Posterior vena cava (tissue), 2 donors: ENCODE measurements at regions of chr10 and their contacts with region 1.

Region 1: GRCh38 chr10:91251430-91252056 is 31.1 kb downstream of the PCGF5 start:
- DNase-seq: no peak

Region 2: DNA sequence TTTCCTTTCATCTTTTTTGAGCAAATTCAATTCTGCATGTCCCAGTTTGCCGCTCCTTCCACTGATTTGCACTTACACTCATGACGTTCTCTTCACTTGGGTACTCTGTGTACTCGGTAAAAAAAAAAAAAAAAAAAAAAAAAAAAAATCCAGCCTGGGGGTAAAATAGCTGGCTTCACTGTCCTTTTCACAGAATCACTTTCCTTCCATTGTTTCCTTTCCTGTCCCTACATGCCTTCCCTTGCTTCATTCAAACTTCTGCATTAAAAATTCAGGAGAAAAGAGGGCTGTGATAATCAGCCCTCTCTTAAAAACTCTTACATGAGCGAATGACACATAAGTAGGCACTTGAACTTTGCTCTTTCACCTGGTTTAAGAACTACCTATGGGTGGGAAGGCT is 339.4 kb before region 1 on chr10:
- intact Hi-C with region 1: loop called (anchors 5 to 10 kb)
- DNase-seq: no peak

Region 3: DNA sequence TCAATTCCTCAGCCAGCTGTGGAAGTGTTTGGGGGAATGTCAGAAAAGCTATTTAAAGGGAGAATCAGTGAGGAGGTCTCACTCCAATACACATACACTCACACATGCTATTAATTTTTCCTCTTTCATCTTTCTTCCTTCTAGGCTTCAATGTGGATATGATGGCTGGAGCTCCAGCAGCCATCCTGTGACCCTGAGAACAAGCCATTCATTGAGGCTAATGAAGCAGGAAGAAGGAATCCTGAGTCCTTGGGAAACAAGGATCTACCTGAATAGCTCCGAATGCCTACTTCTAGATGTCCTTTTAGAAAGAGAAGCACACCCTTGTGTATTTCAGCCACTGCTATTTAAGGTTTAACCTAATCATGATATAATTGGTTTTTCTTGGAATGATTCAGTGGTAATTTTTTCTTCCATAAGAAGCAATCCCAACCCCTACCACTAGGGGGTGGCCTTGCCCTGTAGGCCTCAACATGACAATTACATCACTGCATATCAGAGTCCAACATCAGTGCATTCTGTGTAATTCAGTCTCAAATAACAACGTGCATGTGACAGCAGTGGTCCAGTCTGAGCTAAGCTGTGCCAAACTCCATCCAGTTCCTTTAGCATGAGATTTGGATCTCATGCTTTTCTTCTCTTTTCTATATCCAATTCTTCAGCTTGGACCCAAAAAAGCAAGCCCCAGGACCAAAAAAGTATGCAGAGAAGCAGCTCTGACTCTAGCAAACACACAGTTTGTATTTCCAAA is 245.4 kb before region 1 on chr10:
- intact Hi-C with region 1: loop called in 1 of 2 experiments (anchors 5 kb)
- DNase-seq: no peak